Activated CD4-positive, alpha-beta memory T cell treated with anti-CD3 and anti-CD28 coated beads for 36 hours (primary cell): ENCODE measurements at regions of chr14 and their contacts with region 1.

Region 1: DNA sequence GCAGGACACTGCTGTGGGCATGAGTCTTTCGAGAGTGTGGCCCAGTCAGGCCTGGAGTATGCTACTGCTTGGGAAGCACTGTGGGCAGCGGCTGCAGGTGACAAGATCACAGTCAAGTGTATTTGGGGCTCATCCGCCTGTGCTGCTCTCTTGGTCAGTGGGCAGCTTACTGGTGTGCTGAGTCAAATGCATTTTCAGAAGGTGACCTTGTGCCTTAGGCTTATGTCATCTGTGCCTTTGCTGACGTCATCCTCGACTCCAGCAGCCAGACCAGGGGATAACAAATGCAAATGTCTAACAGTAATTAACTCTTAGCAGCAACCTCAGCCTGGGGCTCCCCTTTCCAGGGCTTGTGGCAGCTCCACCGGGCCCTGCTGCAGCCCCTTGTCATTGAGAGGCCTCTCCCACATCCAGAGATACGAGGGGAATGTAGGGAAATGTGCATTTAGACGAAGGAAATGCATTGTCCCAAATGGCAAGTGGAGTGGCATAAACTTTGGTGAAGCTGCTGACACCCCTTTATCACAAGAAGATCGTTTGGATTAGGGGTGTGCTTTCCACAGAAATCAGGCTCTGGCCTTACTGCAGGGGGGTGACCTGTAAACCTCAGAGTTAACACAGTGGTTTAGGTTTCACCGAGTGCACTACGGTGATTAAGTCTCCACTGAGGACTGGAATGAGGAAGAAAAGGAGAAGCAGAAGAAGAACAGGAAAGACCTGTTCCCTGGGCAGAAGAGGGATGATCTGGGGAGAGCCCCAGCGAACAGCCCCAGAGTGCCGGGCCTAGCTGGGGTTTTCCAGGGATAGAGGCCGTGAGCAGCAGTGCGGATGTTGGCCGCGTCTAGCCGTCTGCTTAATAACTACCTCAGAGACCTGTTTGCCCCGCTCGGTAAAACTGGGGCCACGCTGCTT is 39.7 kb downstream of the PSMA6 start:
- DNase-seq: no peak
- H3K4me3 Mint-ChIP-seq: no peak overlapping the region
- H3K27ac Mint-ChIP-seq: peak overlapping the region; percentile 95
- H3K4me1 Mint-ChIP-seq: peaks cover 30% of the 10 kb centered on the region
- H3K27me3 Mint-ChIP-seq: no peaks in the 10 kb centered on the region

Region 2: DNA sequence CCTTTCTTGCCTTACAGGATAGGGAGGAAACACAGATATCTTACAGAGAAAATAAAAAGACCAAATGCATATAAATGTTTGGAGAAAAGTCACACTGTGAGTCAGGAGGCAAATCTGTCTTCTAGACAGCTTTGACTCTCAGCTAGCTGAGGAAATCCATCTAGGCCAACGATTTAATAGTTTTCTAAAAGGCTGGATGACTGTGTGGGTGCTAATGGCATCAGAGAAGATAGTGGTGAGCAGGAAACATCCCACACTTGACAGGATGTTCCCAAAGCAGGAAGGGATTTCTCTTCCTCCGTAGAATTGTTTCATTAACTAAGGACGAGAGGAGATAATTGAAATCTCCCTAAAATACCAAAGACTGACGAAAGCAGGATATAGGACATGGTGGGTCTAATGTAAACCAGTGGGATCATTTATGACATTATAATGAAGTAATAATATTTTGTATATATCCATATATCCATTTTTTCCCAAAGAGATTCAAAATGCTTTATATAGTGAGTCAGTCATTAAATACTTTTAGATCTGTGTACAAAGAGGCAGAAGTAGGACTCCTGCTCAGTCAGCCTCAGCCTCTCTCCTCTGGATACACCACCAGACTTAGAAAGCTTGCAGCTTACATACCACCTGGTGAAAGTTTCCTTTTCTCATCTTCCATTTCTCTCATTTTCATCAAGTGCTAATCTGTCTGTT is 83.9 kb before region 1 on chr14:
- CTCF ChIA-PET with region 1: no interaction called
- POLR2A ChIA-PET with region 1: no interaction called
- intact Hi-C with region 1: no loop called
- DNase-seq: no peak
- H3K4me3 Mint-ChIP-seq: no peak overlapping the region
- H3K27ac Mint-ChIP-seq: no peak overlapping the region
- H3K4me1 Mint-ChIP-seq: peaks cover 6% of the 10 kb centered on the region
- H3K27me3 Mint-ChIP-seq: no peaks in the 10 kb centered on the region

Region 3: GRCh38 chr14:35355981-35356841 is 24.4 kb after region 1 on chr14:
- CTCF ChIA-PET with region 1: no interaction called
- POLR2A ChIA-PET with region 1: interaction called, 10 read pairs
- intact Hi-C with region 1: loop called (anchors 1 kb)
- DNase-seq: peak; percentile 76
- H3K4me3 Mint-ChIP-seq: peak overlapping the region; percentile 17
- H3K27ac Mint-ChIP-seq: peak overlapping the region; percentile 79
- H3K4me1 Mint-ChIP-seq: peaks cover 40% of the 10 kb centered on the region
- H3K27me3 Mint-ChIP-seq: no peaks in the 10 kb centered on the region

Region 4: DNA sequence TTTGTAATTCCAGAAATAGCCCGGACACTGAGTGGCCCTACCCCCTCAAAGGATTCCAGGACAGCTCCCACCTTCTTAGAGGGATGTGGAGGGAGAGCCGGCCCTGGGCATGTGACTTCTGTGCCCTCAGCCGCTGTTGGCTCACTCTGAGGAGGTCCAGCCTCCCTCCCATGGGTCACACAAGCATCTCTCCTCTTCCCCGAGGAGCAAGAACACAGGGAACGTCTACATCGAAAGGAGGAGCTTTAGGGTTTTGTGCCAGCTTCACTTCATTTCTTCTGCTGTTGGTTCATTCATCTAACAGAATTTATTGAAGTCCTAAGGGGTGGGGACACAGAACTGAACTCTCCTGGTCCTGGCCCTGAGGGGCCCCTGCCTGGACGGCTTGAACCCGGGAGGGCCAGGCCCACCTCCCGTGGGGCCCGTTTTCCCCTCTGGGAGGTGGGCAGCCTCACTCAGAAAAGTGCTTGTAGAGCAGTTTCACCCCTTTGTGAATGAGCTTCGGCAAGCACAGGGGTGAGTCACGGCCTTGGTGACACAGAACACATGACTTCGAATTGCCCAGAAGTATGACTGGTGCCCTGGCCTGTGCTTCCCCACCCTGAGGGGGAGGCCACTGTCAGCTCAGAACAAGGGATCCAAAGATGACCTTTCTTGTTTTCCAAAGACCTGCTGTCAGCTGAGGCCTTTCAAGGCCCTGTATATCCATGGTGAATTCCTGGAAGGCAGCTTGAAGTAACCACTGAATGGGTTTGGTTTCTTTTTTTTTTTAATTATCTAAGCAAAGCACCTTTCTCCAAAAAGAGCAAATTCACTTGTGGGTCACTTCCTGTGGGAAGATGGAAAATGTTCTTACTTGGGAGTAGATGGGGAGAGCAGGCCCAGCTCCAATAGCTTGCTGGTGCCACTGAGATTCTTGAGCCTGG is 33.5 kb after region 1 on chr14:
- CTCF ChIA-PET with region 1: interaction called, 3 read pairs
- POLR2A ChIA-PET with region 1: interaction called, 17 read pairs
- intact Hi-C with region 1: loop called (anchors 1 kb)
- DNase-seq: peak; percentile 94
- H3K4me3 Mint-ChIP-seq: peak overlapping the region; percentile 56
- H3K27ac Mint-ChIP-seq: peak overlapping the region; percentile 96
- H3K4me1 Mint-ChIP-seq: peaks cover 48% of the 10 kb centered on the region
- H3K27me3 Mint-ChIP-seq: no peaks in the 10 kb centered on the region